Psoas muscle (tissue), 8 donors: ENCODE measurements at regions of chrX and their contacts with region 1.

Region 1: DNA sequence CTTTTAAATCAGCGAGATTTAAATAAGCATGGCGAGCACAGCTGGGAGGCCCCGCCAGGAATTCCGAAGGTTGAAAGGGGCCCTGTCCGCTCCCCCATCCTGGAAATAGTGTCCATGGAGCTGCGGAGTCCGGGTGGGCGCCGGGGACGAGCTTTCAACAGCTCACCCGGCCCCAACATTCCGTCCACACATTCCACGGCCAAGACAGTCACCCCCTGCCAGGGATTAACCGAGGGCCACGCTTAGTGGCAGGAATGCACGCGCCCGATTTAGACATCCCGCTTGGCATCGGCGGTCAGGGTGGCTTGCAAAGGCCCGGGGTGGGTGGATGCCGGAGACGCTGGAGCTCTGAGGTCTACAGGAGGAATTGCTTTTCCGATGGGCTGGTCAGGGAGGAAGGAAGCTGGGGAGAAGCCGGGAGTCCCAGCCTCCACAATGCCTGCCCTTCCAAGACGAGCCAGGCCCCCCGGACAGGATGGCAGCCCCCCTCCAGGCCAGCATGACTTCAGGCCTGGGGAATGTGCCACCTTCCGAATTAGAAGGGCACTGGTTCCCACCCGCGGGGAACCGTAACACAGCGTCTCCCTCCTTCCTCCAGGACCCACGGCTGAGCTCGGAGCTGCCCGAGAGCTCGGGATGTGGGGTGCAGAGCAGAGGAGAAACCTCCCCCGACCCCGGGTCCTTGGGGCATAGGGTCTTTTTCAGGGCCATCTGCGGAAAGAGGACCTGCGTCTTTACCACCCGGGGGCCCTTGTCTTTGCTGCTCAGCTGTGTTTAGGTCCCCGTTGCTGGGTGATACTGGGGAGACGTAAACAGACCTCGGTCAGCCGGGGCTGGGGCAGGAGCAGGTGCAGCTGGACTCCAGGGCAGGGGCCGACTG is 26.9 kb upstream of the PPP2R3B start:
- DNase-seq: peak; percentile 23 to 76
- ATAC-seq: peak; percentile 47 to 95 (median 86)
- H3K4me3 ChIP-seq: peak overlapping the region; percentile 60
- H3K27ac ChIP-seq: no peak overlapping the region
- H3K4me1 ChIP-seq: no peaks in the 10 kb centered on the region
- H3K27me3 ChIP-seq: no peaks in the 10 kb centered on the region
- CTCF ChIP-seq: peak; percentile 9

Region 2: DNA sequence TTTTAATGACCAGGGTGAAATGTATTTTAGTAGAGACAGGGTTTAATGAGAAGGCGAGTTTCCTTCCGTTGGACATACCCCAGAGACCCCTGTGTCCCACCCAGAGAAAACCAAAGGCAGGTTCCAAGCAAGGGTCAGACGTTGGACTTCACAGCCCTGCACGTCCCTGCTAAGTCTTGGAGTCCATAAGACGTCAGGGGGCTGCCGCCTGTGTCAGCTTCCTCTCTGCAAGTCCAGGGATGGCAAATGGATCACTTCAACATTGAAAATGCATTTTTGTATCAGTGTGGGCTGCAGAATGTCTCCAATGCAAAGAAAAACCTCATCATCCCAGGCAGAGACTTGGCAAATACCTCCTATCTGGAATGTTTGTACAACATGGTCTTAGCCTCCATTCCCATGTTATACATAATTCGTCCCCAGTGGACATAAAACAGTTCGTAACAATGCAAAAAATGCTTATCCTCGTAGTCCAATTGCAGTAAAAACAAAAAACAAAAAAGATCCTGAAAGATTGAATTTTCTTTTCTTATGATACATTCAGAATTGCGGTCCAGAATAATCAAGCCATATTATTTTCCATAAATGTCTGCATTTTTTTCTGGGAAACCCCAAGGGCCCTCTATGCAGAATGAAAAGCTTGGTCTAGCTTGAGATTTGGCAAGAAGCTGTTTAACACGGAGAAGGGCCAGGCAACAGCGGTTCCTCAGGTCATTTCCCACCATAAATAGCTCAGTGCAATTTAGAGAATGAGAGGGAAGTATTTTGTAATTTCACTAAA is 408.0 kb after region 1 on chrX:
- intact Hi-C with region 1: loop called in 1 of 2 experiments (anchors 5 kb)
- DNase-seq: no peak
- ATAC-seq: no peak
- H3K4me3 ChIP-seq: no peak overlapping the region
- H3K27ac ChIP-seq: no peak overlapping the region
- H3K4me1 ChIP-seq: no peaks in the 10 kb centered on the region
- H3K27me3 ChIP-seq: no peaks in the 10 kb centered on the region
- CTCF ChIP-seq: no peak